SK-N-SH (cell line): ENCODE measurements at regions of chr4 and their contacts with region 1.

Region 1: DNA sequence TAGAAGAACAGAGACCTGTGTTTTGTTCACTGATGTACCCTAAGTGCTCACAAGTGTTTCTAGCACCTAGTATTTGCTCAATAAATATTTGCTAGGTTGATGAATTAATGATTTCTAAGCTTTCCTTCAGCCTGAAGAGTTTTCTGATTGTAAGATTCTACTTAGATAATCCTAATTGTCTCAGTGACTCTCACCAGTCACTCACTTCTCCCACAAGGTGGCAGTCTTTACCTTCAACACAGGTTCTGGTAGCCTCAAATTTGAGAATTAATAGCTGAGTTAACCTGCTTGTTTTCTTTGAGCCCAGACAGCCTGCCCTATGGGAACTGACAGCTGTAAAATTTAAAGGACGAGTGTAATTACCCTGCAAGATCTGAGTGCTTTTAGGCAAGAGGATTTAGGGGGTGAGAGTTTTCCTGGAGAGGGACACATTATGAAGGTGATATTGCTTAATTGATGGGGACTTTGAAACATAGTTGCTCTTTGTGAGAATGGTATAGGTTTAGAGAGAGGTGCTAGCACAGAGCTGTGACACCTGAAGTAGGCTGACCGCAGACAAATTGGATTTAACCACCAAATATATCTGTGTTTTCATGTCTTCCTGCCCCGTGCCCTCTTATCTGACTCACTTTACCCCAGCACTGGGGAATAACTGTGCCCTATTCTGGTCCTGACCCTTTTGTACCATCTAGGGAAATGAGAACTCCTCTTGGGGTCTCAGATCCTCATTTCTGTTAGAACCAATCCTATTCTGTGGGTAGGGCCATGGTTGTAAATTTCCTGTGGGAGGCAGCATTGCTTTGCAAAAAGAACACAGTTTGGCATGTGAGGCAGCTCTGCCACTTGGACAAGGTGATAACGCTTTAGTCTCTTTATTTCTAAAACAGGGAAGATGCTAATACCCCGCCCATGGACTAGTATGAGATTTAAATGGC is 27.7 kb downstream of the CD38 start:
- DNase-seq: peak; percentile 39
- H3K4me3 ChIP-seq: no peak overlapping the region; a peak in 1 of 4 replicates
- H3K27ac ChIP-seq: no peak overlapping the region
- H3K4me1 ChIP-seq: no peaks in the 10 kb centered on the region
- H3K27me3 ChIP-seq: no peaks in the 10 kb centered on the region; the same call in 1 of the 2 replicates
- CTCF ChIP-seq: peak; percentile 88
- EP300 ChIP-seq: no peak
- RAD21 ChIP-seq: peak; percentile 92

Region 2: DNA sequence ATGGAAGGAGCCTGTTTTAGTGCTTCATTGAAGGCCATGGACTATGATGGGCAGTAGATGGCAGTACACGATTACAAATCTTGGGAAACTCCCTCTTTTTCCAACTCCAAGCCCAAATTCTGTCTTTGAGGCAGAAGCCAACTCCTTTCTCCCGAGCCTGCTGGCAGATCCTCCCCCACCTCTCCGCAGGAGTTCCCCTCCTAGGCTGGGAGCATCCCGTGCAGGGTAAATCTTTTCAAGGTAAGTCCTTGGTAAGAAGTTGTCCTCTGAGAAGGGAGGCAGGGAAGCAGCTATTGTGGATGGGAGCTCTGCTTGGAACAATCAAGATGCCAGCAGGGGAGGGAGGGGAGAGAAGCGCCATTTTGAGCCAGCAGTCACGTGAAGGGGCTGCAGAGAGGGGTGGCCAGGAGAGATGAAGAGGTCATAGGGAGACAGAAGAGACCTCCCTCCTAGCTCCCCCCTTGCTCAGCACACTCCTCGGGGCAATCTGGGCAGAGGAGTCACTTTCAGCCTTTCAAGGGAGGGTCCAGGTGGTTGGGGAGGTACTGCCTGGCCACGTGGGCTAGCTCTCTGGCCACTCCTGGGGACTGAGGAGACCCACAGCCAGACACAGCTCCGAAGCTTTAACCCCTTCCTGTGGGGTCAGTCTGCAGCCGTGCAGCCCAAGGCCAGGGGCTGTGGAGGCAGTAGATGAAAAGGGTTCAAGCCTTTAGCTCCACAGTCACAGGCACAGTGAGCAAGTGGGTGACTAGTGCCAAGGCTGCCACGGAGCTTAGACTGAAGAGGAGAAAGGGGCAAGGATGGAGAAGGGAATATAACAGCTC is 326.5 kb before region 1 on chr4:
- CTCF ChIA-PET with region 1: interaction called, 22 read pairs
- POLR2A ChIA-PET with region 1: interaction called, 3 read pairs
- DNase-seq: peak; percentile 74
- H3K4me3 ChIP-seq: peak overlapping the region; percentile 49 to 55
- H3K27ac ChIP-seq: peak overlapping the region; percentile 58 to 93
- H3K4me1 ChIP-seq: peaks cover 10% of the 10 kb centered on the region in 2 experiments; a peak in 3 of 4 replicates
- H3K27me3 ChIP-seq: no peaks in the 10 kb centered on the region
- CTCF ChIP-seq: peak; percentile 79
- EP300 ChIP-seq: no peak
- RAD21 ChIP-seq: peak; percentile 94

Region 3: GRCh38 chr4:15784959-15785634 is 20.8 kb before region 1 on chr4:
- CTCF ChIA-PET with region 1: interaction called, 26 read pairs
- POLR2A ChIA-PET with region 1: no interaction called
- DNase-seq: no peak
- H3K4me3 ChIP-seq: no peak overlapping the region
- H3K27ac ChIP-seq: no peak overlapping the region
- H3K4me1 ChIP-seq: no peaks in the 10 kb centered on the region
- H3K27me3 ChIP-seq: no peaks in the 10 kb centered on the region; the same call in 1 of the 2 replicates
- CTCF ChIP-seq: no peak
- EP300 ChIP-seq: no peak
- RAD21 ChIP-seq: no peak

Region 4: DNA sequence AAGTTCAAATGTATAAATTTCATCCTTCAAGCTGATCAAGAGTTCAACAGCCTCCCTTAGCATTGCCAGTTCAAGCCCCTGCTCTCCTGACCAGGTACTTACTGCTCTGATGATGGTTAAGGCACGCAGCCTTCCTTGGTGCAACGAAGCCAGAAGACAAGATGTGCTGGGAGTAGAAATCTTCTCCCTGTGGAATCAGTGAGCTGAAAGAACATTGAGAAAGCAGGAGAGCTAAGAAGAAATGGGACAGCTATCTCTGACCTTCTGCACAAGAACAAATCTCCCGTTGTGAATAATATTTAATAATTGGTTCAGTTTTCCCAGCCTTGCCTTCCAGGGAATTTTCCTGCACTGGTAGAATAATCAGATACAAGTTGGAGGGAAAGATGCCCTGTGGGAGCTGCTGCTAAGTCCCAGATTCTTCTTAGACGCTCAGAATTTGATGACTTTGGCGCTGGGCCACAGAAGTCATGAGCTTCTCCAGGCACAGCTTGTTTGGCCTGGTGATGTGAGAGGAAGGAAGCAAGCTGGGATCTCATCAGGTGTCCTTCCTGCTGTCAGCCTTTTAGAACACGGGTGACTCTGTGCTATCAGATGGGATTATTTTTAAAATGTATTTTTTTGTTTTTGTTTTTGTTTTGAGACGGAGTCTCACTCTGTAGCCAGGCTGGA is 50.1 kb after region 1 on chr4:
- CTCF ChIA-PET with region 1: interaction called, 15 read pairs
- POLR2A ChIA-PET with region 1: no interaction called
- DNase-seq: no peak
- H3K4me3 ChIP-seq: no peak overlapping the region
- H3K27ac ChIP-seq: no peak overlapping the region
- H3K4me1 ChIP-seq: peaks cover 0 to 3% of the 10 kb centered on the region in 2 experiments; a peak in 2 of 4 replicates
- H3K27me3 ChIP-seq: no peaks in the 10 kb centered on the region; the same call in 1 of the 2 replicates
- CTCF ChIP-seq: no peak
- EP300 ChIP-seq: no peak
- RAD21 ChIP-seq: no peak

Region 5: GRCh38 chr4:15956179-15956850 is 150.5 kb after region 1 on chr4:
- CTCF ChIA-PET with region 1: interaction called, 124 read pairs
- POLR2A ChIA-PET with region 1: no interaction called
- DNase-seq: peak; percentile 73
- H3K4me3 ChIP-seq: no peak overlapping the region
- H3K27ac ChIP-seq: no peak overlapping the region
- H3K4me1 ChIP-seq: peaks cover 0 to 3% of the 10 kb centered on the region in 2 experiments; a peak in 1 of 4 replicates
- H3K27me3 ChIP-seq: no peaks in the 10 kb centered on the region
- CTCF ChIP-seq: peak; percentile 98
- EP300 ChIP-seq: no peak
- RAD21 ChIP-seq: peak; percentile 92

Region 6: DNA sequence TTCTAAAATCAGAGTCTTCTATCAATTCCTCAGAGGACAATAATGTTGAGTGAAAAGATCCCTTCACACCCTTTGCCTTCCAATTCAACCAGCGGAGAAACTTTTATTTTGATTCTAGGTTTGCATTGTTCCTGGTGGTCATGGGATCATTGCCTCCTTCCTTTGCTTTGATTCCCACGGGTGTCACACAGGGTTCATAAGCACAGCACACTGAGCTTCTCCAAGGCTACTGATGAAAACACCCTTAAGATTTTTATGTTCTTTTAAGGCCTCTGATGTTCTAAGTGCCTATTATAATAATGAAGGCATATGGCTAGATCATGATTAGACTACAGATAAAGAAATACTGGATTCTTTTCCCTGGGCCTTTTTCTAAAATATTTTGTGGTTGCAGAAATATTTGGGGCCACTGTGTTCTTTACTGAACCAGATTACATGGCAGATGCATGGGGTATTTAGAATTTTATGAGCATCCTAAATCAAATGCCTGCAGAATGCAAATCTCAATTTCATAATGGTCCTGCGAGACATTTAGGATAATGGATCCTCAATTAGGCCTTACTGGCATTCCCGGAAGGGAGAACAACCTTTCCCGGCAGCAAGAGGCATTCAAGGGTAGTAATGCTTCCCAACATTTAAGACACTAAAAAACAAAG is 201.1 kb after region 1 on chr4:
- CTCF ChIA-PET with region 1: interaction called, 69 read pairs
- POLR2A ChIA-PET with region 1: no interaction called
- DNase-seq: no peak
- H3K4me3 ChIP-seq: no peak overlapping the region
- H3K27ac ChIP-seq: peak overlapping the region in 1 of 2 experiments; percentile 61; a peak in 2 of 4 replicates
- H3K4me1 ChIP-seq: peaks cover 0 to 15% of the 10 kb centered on the region in 2 experiments; a peak in 2 of 4 replicates
- H3K27me3 ChIP-seq: peaks cover 4% of the 10 kb centered on the region; the same call in 1 of the 2 replicates
- CTCF ChIP-seq: no peak
- EP300 ChIP-seq: no peak
- RAD21 ChIP-seq: no peak

Region 7: DNA sequence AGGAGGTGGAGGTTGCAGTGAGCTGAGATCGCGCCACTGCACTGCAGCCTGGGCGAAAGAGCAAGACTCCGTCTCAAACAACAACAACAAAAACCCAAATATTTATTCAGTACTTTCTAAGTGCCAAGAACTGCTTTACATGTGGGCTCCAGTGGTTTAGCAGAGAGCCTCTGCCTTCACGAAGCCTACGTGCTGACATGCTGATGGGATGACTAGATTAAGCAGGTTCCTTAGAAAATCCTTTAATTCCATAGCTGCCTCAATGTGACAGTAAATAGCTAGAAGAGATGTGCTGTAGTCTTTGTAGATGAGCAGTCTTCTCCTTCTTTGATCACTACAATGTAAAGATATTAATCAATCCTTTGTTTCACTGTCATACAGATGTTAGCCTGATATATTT is 370.8 kb after region 1 on chr4:
- CTCF ChIA-PET with region 1: no interaction called
- POLR2A ChIA-PET with region 1: no interaction called
- DNase-seq: no peak
- H3K4me3 ChIP-seq: no peak overlapping the region
- H3K27ac ChIP-seq: no peak overlapping the region
- H3K4me1 ChIP-seq: no peaks in the 10 kb centered on the region
- H3K27me3 ChIP-seq: no peaks in the 10 kb centered on the region
- CTCF ChIP-seq: no peak
- EP300 ChIP-seq: no peak
- RAD21 ChIP-seq: no peak